ENCODE measurements at regions of chr1 and their contacts with region 1.

Region 1: GRCh38 chr1:42949312-42950145 is 9.1 kb downstream of the SLC2A1 start:
- DNase-seq: no peak
- H3K4me3 Mint-ChIP-seq: peak overlapping the region; percentile 14
- H3K27ac Mint-ChIP-seq: peak overlapping the region; percentile 80
- H3K4me1 Mint-ChIP-seq: peaks cover 94% of the 10 kb centered on the region
- H3K27me3 Mint-ChIP-seq: no peaks in the 10 kb centered on the region

Region 2: GRCh38 chr1:42936309-42937078 is 13.0 kb before region 1 on chr1:
- CTCF ChIA-PET with region 1: interaction called, 30 read pairs
- POLR2A ChIA-PET with region 1: interaction called, 3 read pairs
- DNase-seq: no peak
- H3K4me3 Mint-ChIP-seq: no peak overlapping the region
- H3K27ac Mint-ChIP-seq: peak overlapping the region; percentile 99
- H3K4me1 Mint-ChIP-seq: peaks cover 96% of the 10 kb centered on the region
- H3K27me3 Mint-ChIP-seq: no peaks in the 10 kb centered on the region